ENCODE measurements at regions of chr19 and their contacts with region 1.

Region 1: GRCh38 chr19:12965017-12965811 is 4.2 kb upstream of the DAND5 start:
- DNase-seq: peak; percentile 58
- ATAC-seq: peak; percentile 100
- H3K4me3 ChIP-seq: peak overlapping the region; percentile 39
- H3K27ac ChIP-seq: peak overlapping the region; percentile 13; the same call in 1 of the 2 replicates
- H3K4me1 ChIP-seq: peaks cover 4% of the 10 kb centered on the region; the same call in 1 of the 2 replicates
- H3K27me3 ChIP-seq: no peaks in the 10 kb centered on the region; the same call in 1 of the 2 replicates
- CTCF ChIP-seq: peak; percentile 97
- POLR2A ChIP-seq: no peak
- RAD21 ChIP-seq: peak; percentile 58

Region 2: GRCh38 chr19:12890787-12891552 is 74.2 kb before region 1 on chr19 and contains the start of gene GCDH:
- CTCF ChIA-PET with region 1: no interaction called
- POLR2A ChIA-PET with region 1: no interaction called
- dilution Hi-C with region 1: no loop called
- in situ Hi-C with region 1: no loop called
- intact Hi-C with region 1: loop called (anchors 2 kb)
- DNase-seq: peak; percentile 98
- ATAC-seq: peak; percentile 99
- H3K4me3 ChIP-seq: peak within 1 kb of the TSS; percentile 78
- H3K27ac ChIP-seq: peak within 1 kb of the TSS; percentile 3; the same call in 1 of the 2 replicates
- H3K4me1 ChIP-seq: peaks cover 6% of the 10 kb centered on the region
- H3K27me3 ChIP-seq: peaks cover 21% of the 10 kb centered on the region
- CTCF ChIP-seq: no peak
- POLR2A ChIP-seq: no peak
- RAD21 ChIP-seq: no peak
- total RNA-seq, gene GCDH: 41.1 and 41.6 TPM in 2 replicates

Region 3: DNA sequence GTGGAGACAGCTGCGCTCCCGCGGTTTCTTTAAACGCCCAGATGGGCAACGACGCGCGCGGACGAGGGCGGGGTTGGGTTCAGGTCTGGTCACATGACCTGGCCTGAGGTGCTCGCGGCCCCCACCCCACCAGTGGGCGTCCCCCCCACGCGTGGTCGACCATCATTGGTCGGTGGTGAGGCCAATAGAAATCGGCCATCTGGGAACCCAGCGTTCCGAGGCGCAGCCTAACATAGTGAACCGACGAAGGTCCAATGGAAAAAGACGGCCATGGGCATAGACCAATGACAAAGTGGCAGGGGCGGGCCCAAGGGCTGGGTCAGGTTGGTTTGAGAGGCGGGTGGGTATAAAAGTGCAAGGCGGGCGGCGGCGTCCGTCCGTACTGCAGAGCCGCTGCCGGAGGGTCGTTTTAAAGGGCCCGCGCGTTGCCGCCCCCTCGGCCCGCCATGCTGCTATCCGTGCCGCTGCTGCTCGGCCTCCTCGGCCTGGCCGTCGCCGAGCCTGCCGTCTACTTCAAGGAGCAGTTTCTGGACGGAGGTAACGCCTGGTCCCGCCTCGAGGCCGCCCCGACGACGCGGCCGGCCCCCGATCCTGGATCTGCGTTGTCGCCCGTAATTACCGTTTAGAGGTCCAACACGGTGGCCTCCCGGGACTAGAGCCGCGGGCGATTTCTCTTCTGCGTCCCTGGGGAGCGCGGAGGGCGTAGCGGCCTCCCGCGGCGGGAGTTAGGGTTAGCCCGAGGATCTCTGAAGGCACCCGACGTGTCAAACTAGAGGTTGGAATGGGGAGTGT is 26.8 kb before region 1 on chr19 and contains the start of gene CALR:
- CTCF ChIA-PET with region 1: no interaction called
- POLR2A ChIA-PET with region 1: no interaction called
- dilution Hi-C with region 1: no loop called
- in situ Hi-C with region 1: no loop called
- intact Hi-C with region 1: no loop called
- DNase-seq: peak; percentile 99
- ATAC-seq: peak; percentile 90
- H3K4me3 ChIP-seq: peak within 1 kb of the TSS; percentile 80
- H3K27ac ChIP-seq: peak within 1 kb of the TSS; percentile 90
- H3K4me1 ChIP-seq: peaks cover 15% of the 10 kb centered on the region
- H3K27me3 ChIP-seq: no peaks in the 10 kb centered on the region
- CTCF ChIP-seq: peak; percentile 28; the same call in 1 of the 2 replicates
- POLR2A ChIP-seq: peak; percentile 100
- RAD21 ChIP-seq: no peak
- total RNA-seq, gene CALR: 3,245 and 3,358 TPM in 2 replicates

Region 4: DNA sequence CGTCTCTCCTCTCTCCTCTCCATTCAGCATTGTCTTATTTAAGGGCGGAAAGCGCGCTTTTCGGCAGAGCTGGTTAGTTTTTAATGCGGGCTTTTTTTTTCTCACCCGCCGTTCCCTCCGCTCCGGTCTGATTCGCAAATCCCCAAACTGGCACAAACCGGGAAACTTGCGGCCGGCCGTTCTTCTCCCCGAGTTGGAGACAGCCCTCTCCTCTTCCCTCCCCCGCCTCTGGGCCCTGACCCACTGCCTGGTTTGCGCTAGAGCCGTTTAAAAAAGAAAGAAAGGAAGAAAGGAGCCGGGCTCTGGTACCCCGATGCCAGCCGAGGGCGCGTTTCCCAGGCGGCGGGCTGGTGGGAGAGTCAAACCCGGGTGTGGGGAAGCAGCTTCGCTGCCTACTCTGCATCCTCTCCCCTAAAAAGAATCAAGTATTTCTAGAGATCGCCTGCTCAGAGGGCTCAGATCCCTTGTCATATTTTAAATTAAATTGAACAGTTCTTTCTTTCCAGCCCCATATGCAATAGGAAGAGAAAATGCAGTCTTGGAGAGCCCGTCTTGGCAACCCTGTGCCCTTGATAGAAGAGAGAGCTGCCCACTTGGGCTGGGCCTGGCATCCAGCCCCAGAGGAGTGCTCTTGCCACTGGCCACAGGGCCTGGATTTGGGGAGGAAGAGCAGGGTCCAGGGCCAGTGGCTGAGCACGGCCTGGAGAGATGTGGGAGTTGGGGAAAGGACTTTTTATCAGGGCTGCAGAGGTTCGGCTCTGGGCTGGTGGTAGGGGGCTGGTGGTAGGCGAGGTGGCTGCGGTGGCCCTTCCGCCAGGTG is 49.1 kb after region 1 on chr19:
- CTCF ChIA-PET with region 1: no interaction called
- POLR2A ChIA-PET with region 1: interaction called, 11 read pairs
- dilution Hi-C with region 1: no loop called
- in situ Hi-C with region 1: no loop called
- intact Hi-C with region 1: no loop called
- DNase-seq: no peak
- ATAC-seq: no peak
- H3K4me3 ChIP-seq: no peak overlapping the region
- H3K27ac ChIP-seq: no peak overlapping the region
- H3K4me1 ChIP-seq: peaks cover 30% of the 10 kb centered on the region
- H3K27me3 ChIP-seq: no peaks in the 10 kb centered on the region
- CTCF ChIP-seq: no peak
- POLR2A ChIP-seq: no peak
- RAD21 ChIP-seq: no peak

Region 5: DNA sequence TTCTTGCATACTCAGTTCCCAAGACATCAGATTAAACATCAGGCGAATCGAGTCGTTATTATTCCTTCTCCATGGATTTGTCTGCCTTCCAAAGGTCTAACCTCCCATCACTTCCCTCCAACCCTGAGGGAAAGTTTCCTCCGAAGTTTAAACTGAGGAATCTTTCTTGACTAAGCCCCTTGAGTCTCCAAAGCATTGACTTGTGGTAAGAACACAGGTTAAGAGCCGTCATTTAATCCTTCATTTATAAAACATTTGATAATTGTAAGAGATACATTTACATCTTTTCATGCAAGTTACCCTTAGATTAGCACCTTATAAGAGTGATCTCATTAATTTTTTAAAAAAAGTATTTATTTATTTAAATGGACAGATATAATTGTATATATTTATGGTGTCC is 1883.6 kb after region 1 on chr19 and contains the start of gene OR7A10:
- CTCF ChIA-PET with region 1: no interaction called
- POLR2A ChIA-PET with region 1: no interaction called
- dilution Hi-C with region 1: no loop called
- in situ Hi-C with region 1: no loop called
- intact Hi-C with region 1: no loop called
- DNase-seq: no peak
- ATAC-seq: no peak
- H3K4me3 ChIP-seq: no peak within 1 kb of the TSS
- H3K27ac ChIP-seq: no peak within 1 kb of the TSS
- H3K4me1 ChIP-seq: no peaks in the 10 kb centered on the region
- H3K27me3 ChIP-seq: no peaks in the 10 kb centered on the region
- CTCF ChIP-seq: no peak
- POLR2A ChIP-seq: no peak
- RAD21 ChIP-seq: no peak
- total RNA-seq, gene OR7A10: not detected in 2 replicates

Measured in IMR-90 (cell line).